ENCODE measurements at regions of chr7 and their contacts with region 1.

Region 1: GRCh38 chr7:107150375-107151073 is 18.3 kb upstream of the HBP1 start:
- DNase-seq: peak in 3 of 4 donors; percentile 59 to 85 (median 70)
- ATAC-seq: peak; percentile 79
- H3K4me3 ChIP-seq: no peak overlapping the region
- H3K27ac ChIP-seq: no peak overlapping the region
- H3K4me1 ChIP-seq: peaks cover 0 to 8% of the 10 kb centered on the region in 2 donors
- H3K27me3 ChIP-seq: no peaks in the 10 kb centered on the region
- CTCF ChIP-seq: peak; percentile 58 to 71

Region 2: GRCh38 chr7:106947244-106947728 is 203.2 kb before region 1 on chr7:
- intact Hi-C with region 1: loop called in 1 of 2 experiments (anchors 10 kb)
- DNase-seq: peak in 2 of 4 donors; percentile 46 to 79
- ATAC-seq: peak; percentile 88
- H3K4me3 ChIP-seq: no peak overlapping the region
- H3K27ac ChIP-seq: no peak overlapping the region
- H3K4me1 ChIP-seq: peaks cover 0 to 2% of the 10 kb centered on the region in 2 donors
- H3K27me3 ChIP-seq: no peaks in the 10 kb centered on the region
- CTCF ChIP-seq: peak; percentile 45 to 66

Region 3: DNA sequence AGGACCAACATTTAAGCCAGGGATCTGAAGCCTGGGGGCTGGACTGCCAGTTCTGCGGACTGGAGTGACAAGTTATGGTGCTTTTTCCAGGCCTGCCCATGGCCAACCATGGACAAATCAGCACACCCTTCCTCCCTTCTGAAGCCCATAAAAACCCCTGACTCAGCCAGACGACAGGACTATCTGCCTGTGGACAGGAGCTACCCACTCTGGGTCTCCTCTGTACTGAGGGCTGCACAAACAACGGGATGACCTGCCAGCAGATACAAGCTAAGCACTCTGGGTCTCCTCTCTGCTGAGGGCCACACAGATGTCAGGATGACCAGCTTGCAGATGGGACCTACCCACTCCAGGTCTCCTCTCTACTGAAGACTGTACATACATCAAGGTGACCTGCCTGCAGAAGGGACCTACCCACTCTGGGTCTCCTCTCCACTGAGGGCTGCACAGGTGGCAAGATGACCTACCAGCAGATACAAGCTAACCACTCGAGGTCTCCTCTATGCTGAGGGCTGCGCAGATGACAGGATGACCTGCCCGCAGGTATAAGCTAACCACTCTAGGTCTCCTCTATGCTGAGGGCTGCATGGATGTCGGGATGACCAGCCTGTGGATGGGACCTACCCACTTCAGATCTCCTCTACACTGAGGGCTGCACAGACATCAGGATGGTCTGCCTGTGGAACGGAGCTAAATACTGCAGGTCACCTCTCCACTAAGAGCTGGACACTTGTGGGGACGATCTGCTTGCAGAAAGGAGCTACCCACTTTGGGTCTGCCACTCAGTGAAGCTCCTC is 209.2 kb after region 1 on chr7:
- intact Hi-C with region 1: no loop called
- DNase-seq: no peak
- ATAC-seq: no peak
- H3K4me3 ChIP-seq: no peak overlapping the region
- H3K27ac ChIP-seq: no peak overlapping the region
- H3K4me1 ChIP-seq: no peaks in the 10 kb centered on the region
- H3K27me3 ChIP-seq: no peaks in the 10 kb centered on the region
- CTCF ChIP-seq: no peak

Measured in left lung (tissue), 14 donors.